ENCODE measurements at regions of chr22 and their contacts with region 1.

Region 1: DNA sequence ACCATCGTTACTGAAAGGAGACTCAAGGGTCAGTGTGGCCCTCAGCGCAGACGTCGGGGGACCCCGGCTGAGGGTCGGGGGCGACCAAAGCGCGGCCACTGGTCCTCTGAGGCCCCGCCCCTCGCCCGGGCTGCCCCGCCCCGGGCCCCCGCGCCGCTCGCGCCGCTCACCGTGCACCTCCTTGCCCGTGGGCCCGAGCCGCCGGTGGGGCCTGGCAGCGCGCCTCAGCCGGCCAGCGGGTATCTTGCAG is 468 bp downstream of the ANKRD54 start:
- DNase-seq: no peak
- ATAC-seq: peak; percentile 23
- H3K4me3 Mint-ChIP-seq: peak overlapping the region; percentile 89
- H3K27ac Mint-ChIP-seq: peak overlapping the region; percentile 85
- H3K4me1 Mint-ChIP-seq: peaks cover 25% of the 10 kb centered on the region
- H3K27me3 Mint-ChIP-seq: no peaks in the 10 kb centered on the region
- CTCF ChIP-seq: no peak

Region 2: GRCh38 chr22:37807410-37808293 is 36.0 kb before region 1 on chr22 and contains the start of gene GCAT:
- CTCF ChIA-PET with region 1: no interaction called
- POLR2A ChIA-PET with region 1: interaction called, 12 read pairs
- intact Hi-C with region 1: loop called (anchors 1 kb)
- DNase-seq: peak; percentile 73
- ATAC-seq: peak; percentile 98
- H3K4me3 Mint-ChIP-seq: peak within 1 kb of the TSS; percentile 70
- H3K27ac Mint-ChIP-seq: no peak within 1 kb of the TSS
- H3K4me1 Mint-ChIP-seq: peaks cover 43% of the 10 kb centered on the region
- H3K27me3 Mint-ChIP-seq: peaks cover 46% of the 10 kb centered on the region
- CTCF ChIP-seq: no peak
- total RNA-seq, gene GCAT: 0.40 and 0.83 TPM in 2 replicates

Region 3: GRCh38 chr22:38163844-38164550 is 320.3 kb after region 1 on chr22:
- CTCF ChIA-PET with region 1: no interaction called
- POLR2A ChIA-PET with region 1: no interaction called
- intact Hi-C with region 1: loop called (anchors 5 kb)
- DNase-seq: no peak
- ATAC-seq: no peak
- H3K4me3 Mint-ChIP-seq: no peak overlapping the region
- H3K27ac Mint-ChIP-seq: peak overlapping the region; percentile 79
- H3K4me1 Mint-ChIP-seq: peaks cover 40% of the 10 kb centered on the region
- H3K27me3 Mint-ChIP-seq: no peaks in the 10 kb centered on the region
- CTCF ChIP-seq: no peak

Region 4: GRCh38 chr22:38681784-38682335 is 838.2 kb after region 1 on chr22 and contains the start of gene TOMM22:
- CTCF ChIA-PET with region 1: no interaction called
- POLR2A ChIA-PET with region 1: no interaction called
- intact Hi-C with region 1: loop called (anchors 5 kb)
- DNase-seq: peak; percentile 84
- ATAC-seq: peak; percentile 98
- H3K4me3 Mint-ChIP-seq: peak within 1 kb of the TSS; percentile 97
- H3K27ac Mint-ChIP-seq: peak within 1 kb of the TSS; percentile 92
- H3K4me1 Mint-ChIP-seq: peaks cover 20% of the 10 kb centered on the region
- H3K27me3 Mint-ChIP-seq: no peaks in the 10 kb centered on the region
- CTCF ChIP-seq: no peak
- total RNA-seq, gene TOMM22: 99.4 and 109 TPM in 2 replicates